K562 (cell line): ENCODE measurements at regions of chr5 and their contacts with region 1.

Region 1: GRCh38 chr5:31825518-31826068 is 186.7 kb downstream of the PDZD2 start:
- DNase-seq: peak in 3 of 4 experiments; percentile 22 to 63 (median 30)
- ATAC-seq: peak; percentile 94
- H3K4me3 ChIP-seq: no peak overlapping the region
- H3K27ac ChIP-seq: no peak overlapping the region
- H3K4me1 ChIP-seq: no peaks in the 10 kb centered on the region
- H3K27me3 ChIP-seq: no peaks in the 10 kb centered on the region; a peak in 1 of 5 replicates
- CTCF ChIP-seq: peak; percentile 51 to 81 (median 68); a peak in 5 of 6 replicates
- EP300 ChIP-seq: no peak
- POLR2A ChIP-seq: no peak
- RAD21 ChIP-seq: peak; percentile 32 to 78; a peak in 3 of 4 replicates

Region 2: GRCh38 chr5:31866166-31866565 is 40.6 kb after region 1 on chr5:
- CTCF ChIA-PET with region 1: no interaction called
- POLR2A ChIA-PET with region 1: no interaction called
- in situ Hi-C with region 1: no loop called
- intact Hi-C with region 1: no loop called
- DNase-seq: no peak
- ATAC-seq: no peak
- H3K4me3 ChIP-seq: no peak overlapping the region
- H3K27ac ChIP-seq: no peak overlapping the region
- H3K4me1 ChIP-seq: no peaks in the 10 kb centered on the region
- H3K27me3 ChIP-seq: peaks cover 10 to 39% of the 10 kb centered on the region in 2 experiments; a peak in 4 of 5 replicates
- CTCF ChIP-seq: no peak
- EP300 ChIP-seq: no peak
- POLR2A ChIP-seq: no peak
- RAD21 ChIP-seq: no peak

Region 3: GRCh38 chr5:32147236-32147635 is 321.6 kb after region 1 on chr5:
- CTCF ChIA-PET with region 1: no interaction called
- POLR2A ChIA-PET with region 1: no interaction called
- in situ Hi-C with region 1: no loop called
- intact Hi-C with region 1: no loop called
- DNase-seq: no peak
- ATAC-seq: 0 out of 3 replicates have a peak, but pooled peaks have one; percentile 8
- H3K4me3 ChIP-seq: no peak overlapping the region
- H3K27ac ChIP-seq: no peak overlapping the region
- H3K4me1 ChIP-seq: peaks cover 0 to 4% of the 10 kb centered on the region in 2 experiments; a peak in 3 of 5 replicates
- H3K27me3 ChIP-seq: no peaks in the 10 kb centered on the region
- CTCF ChIP-seq: no peak
- EP300 ChIP-seq: no peak
- POLR2A ChIP-seq: no peak
- RAD21 ChIP-seq: no peak

Region 4: GRCh38 chr5:32182463-32183081 is 357.0 kb after region 1 on chr5:
- CTCF ChIA-PET with region 1: no interaction called
- POLR2A ChIA-PET with region 1: no interaction called
- in situ Hi-C with region 1: no loop called
- intact Hi-C with region 1: no loop called
- DNase-seq: no peak
- ATAC-seq: peak; percentile 50
- H3K4me3 ChIP-seq: no peak overlapping the region
- H3K27ac ChIP-seq: no peak overlapping the region
- H3K4me1 ChIP-seq: no peaks in the 10 kb centered on the region
- H3K27me3 ChIP-seq: no peaks in the 10 kb centered on the region
- CTCF ChIP-seq: no peak
- EP300 ChIP-seq: no peak
- POLR2A ChIP-seq: no peak
- RAD21 ChIP-seq: no peak

Region 5: GRCh38 chr5:32329308-32329834 is 503.8 kb after region 1 on chr5:
- CTCF ChIA-PET with region 1: no interaction called
- POLR2A ChIA-PET with region 1: no interaction called
- in situ Hi-C with region 1: no loop called
- intact Hi-C with region 1: loop called (anchors 2 kb)
- DNase-seq: peak; percentile 71 to 87 (median 78)
- ATAC-seq: peak; percentile 98
- H3K4me3 ChIP-seq: no peak overlapping the region
- H3K27ac ChIP-seq: no peak overlapping the region
- H3K4me1 ChIP-seq: peaks cover 0 to 3% of the 10 kb centered on the region in 2 experiments; a peak in 1 of 5 replicates
- H3K27me3 ChIP-seq: no peaks in the 10 kb centered on the region
- CTCF ChIP-seq: peak; percentile 87 to 95 (median 94)
- EP300 ChIP-seq: no peak
- POLR2A ChIP-seq: no peak
- RAD21 ChIP-seq: peak; percentile 90 to 94